HepG2 (cell line): ENCODE measurements at regions of chr1 and their contacts with region 1.

Region 1: DNA sequence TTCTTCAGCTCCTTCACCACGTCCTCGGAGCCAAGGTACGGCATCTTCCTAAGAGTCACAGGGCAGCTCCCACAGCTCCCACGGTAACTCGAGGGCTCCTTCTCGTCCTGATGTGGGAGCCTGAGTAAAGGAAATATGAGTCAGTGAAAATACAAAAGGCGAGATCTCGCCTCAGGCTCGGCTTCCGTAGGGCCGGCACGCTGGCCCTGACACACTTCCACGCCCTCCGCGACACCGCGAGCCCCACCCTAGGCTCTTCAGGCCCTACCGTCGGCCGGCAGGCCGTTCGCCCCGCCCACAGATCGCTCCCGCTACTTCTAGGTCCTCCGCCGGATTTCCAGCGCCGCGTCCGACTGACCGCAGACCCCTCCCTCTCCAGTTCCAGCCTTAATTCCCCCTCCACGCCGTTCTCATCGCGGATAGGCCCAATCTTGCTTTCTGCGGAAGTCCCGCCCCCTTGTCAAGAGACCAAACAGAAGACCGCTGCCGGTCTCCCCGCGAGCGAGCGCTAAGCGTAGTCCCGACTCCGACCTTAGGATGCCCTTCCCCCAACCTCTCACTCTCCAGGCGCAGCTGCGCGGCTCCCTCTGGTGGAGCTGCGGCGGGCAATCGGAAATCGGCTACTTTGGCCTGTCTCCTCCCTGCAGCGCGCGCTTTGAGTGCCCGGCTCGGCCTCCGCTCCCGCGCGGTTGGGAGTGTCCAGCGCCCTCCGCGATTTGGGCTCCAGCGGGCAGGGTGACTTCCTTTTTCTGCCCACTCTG is at the starts of genes AP4B1 and DCLRE1B:
- DNase-seq: peak; percentile 99
- ATAC-seq: peak; percentile 95
- H3K4me3 ChIP-seq: peak within 1 kb of the TSS; percentile 81 to 90 (median 88)
- H3K27ac ChIP-seq: peak within 1 kb of the TSS; percentile 78
- H3K4me1 ChIP-seq: peaks cover 24% of the 10 kb centered on the region; the same call in 1 of the 2 replicates
- H3K27me3 ChIP-seq: no peaks in the 10 kb centered on the region; a peak in 1 of 5 replicates
- CTCF ChIP-seq: peak; percentile 94
- EP300 ChIP-seq: peak; percentile 5 to 39; a peak in 2 of 4 replicates
- POLR2A ChIP-seq: peak; percentile 76 to 77
- RAD21 ChIP-seq: peak; percentile 90
- total RNA-seq, gene AP4B1: 9.7 and 12.0 TPM in 2 replicates
- total RNA-seq, gene DCLRE1B: 8.0 and 11.5 TPM in 2 replicates

Region 2: GRCh38 chr1:113811888-113812660 is 92.8 kb before region 1 on chr1 and contains the start of gene RSBN1:
- CTCF ChIA-PET with region 1: no interaction called
- POLR2A ChIA-PET with region 1: interaction called, 9 read pairs
- in situ Hi-C with region 1: no loop called
- intact Hi-C with region 1: loop called (anchors 1 kb)
- DNase-seq: peak; percentile 97
- ATAC-seq: peak; percentile 98
- H3K4me3 ChIP-seq: peak within 1 kb of the TSS; percentile 76 to 99 (median 88)
- H3K27ac ChIP-seq: peak within 1 kb of the TSS; percentile 83
- H3K4me1 ChIP-seq: peaks cover 28% of the 10 kb centered on the region
- H3K27me3 ChIP-seq: no peaks in the 10 kb centered on the region; a peak in 1 of 5 replicates
- CTCF ChIP-seq: no peak; the same call in 1 of the 2 replicates
- EP300 ChIP-seq: 0 out of 4 replicates have a peak, but pooled peaks of 1 of the 2 experiments have one; percentile 5
- POLR2A ChIP-seq: peak; percentile 68 to 69
- RAD21 ChIP-seq: no peak
- total RNA-seq, gene RSBN1: 10.4 and 13.6 TPM in 2 replicates

Region 3: DNA sequence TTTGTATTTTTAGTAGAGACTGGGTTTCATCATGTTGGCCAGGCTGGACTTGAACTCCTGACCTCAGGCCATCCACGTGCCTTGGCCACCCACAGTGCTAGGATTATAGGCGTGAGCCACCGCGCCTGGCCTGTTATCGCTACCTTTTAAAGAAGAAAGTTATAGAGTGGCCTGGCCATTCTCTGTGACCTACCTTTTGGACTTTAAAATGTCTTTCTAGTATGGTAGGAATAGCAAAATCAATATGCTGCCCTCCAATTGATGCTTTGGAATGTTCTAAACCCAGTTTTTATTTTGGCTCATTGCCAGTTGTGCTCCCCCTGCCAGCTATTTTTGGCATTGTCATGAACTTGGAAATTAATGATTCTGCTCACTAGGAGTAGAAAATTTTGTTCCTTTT is 44.2 kb after region 1 on chr1:
- CTCF ChIA-PET with region 1: no interaction called
- POLR2A ChIA-PET with region 1: interaction called, 3 read pairs
- in situ Hi-C with region 1: no loop called
- intact Hi-C with region 1: loop called (anchors 1 kb)
- DNase-seq: no peak
- ATAC-seq: no peak; the same call in 2 of the 3 replicates
- H3K4me3 ChIP-seq: no peak overlapping the region
- H3K27ac ChIP-seq: peak overlapping the region; percentile 62
- H3K4me1 ChIP-seq: peaks cover 58% of the 10 kb centered on the region
- H3K27me3 ChIP-seq: no peaks in the 10 kb centered on the region
- CTCF ChIP-seq: peak; percentile 7; the same call in 1 of the 2 replicates
- EP300 ChIP-seq: no peak
- POLR2A ChIP-seq: no peak
- RAD21 ChIP-seq: no peak